Psoas muscle (tissue), 8 donors: ENCODE measurements at regions of chr6 and their contacts with region 1.

Region 1: DNA sequence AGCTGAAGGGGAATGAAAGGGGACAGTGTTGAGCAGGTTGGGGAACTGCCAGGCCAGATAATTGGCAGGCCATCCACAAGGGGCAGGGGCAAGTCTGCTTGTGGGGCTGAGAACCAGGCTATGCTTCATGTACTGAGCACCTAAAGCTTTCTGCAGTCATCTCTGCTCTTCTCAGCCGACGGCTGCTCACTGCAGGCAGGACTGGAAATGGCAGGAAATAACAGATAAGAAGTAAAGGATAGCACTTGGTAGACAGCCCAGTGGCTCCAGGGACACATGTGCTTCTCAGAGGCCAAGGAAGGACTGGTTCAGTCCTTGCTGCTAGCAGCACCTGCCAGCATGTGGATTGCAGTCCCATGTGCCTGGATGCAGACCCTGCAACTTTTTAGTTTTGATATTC is 89.8 kb downstream of the CD164 start:
- DNase-seq: peak in 1 of 2 donors; percentile 71
- ATAC-seq: peak; percentile 62 to 85 (median 81)
- H3K4me3 ChIP-seq: no peak overlapping the region
- H3K27ac ChIP-seq: peak overlapping the region; percentile 73
- H3K4me1 ChIP-seq: peaks cover 25% of the 10 kb centered on the region
- H3K27me3 ChIP-seq: no peaks in the 10 kb centered on the region
- CTCF ChIP-seq: peak; percentile 15

Region 2: GRCh38 chr6:109117346-109118035 is 174.9 kb before region 1 on chr6:
- intact Hi-C with region 1: no loop called
- DNase-seq: no peak
- ATAC-seq: peak in 2 of 4 donors; percentile 27 to 34
- H3K4me3 ChIP-seq: no peak overlapping the region
- H3K27ac ChIP-seq: peak overlapping the region; percentile 8
- H3K4me1 ChIP-seq: peaks cover 35% of the 10 kb centered on the region
- H3K27me3 ChIP-seq: no peaks in the 10 kb centered on the region
- CTCF ChIP-seq: no peak

Region 3: DNA sequence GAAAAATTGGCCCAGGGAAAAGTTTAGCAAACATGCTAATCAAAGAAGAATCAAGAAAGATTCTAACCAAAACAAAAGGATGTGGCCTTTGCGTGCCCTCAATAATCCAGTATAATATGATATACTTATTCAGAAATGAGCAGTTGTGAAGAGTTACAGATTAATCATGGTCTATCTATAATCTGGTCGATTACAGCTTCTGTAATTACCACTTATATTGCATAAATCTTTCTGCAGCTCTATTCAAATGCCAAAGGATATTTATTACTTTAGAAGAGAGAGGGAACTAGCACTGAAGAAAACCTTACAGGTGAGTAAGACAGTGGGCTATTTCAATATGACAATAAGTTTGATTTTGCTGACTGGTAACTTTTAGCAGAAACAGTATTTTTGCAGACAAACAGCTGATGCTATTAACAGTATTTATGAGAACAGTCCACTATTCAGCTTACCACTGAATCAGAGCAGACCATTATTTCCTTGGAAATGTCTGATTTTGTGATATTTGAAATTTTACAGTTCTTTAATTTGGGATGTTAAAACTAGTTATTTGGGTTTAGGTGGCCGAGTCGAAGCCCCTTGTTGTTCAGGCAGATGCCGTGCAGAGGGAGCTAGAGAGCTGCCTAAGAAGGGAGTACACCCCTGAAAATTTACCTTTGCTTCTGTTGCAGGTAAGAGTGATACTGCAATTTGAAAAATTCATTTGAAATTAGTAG is 104.9 kb before region 1 on chr6:
- intact Hi-C with region 1: loop called (anchors 5 kb)
- DNase-seq: peak in 1 of 2 donors; percentile 26
- ATAC-seq: peak; percentile 76 to 95 (median 89)
- H3K4me3 ChIP-seq: no peak overlapping the region
- H3K27ac ChIP-seq: no peak overlapping the region
- H3K4me1 ChIP-seq: no peaks in the 10 kb centered on the region
- H3K27me3 ChIP-seq: no peaks in the 10 kb centered on the region
- CTCF ChIP-seq: peak; percentile 94

Region 4: GRCh38 chr6:109229536-109229935 is 62.9 kb before region 1 on chr6:
- intact Hi-C with region 1: loop called (anchors 5 to 10 kb)
- DNase-seq: no peak
- ATAC-seq: no peak
- H3K4me3 ChIP-seq: no peak overlapping the region
- H3K27ac ChIP-seq: no peak overlapping the region
- H3K4me1 ChIP-seq: peaks cover 4% of the 10 kb centered on the region
- H3K27me3 ChIP-seq: no peaks in the 10 kb centered on the region
- CTCF ChIP-seq: no peak

Region 5: GRCh38 chr6:109243863-109244825 is 48.3 kb before region 1 on chr6:
- intact Hi-C with region 1: loop called (anchors 2 to 10 kb)
- DNase-seq: no peak
- ATAC-seq: no peak
- H3K4me3 ChIP-seq: no peak overlapping the region
- H3K27ac ChIP-seq: no peak overlapping the region
- H3K4me1 ChIP-seq: peaks cover 32% of the 10 kb centered on the region
- H3K27me3 ChIP-seq: no peaks in the 10 kb centered on the region
- CTCF ChIP-seq: no peak